Transverse colon (tissue), 4 donors: ENCODE measurements at regions of chr2 and their contacts with region 1.

Region 1: GRCh38 chr2:222959336-222959735 is 92.7 kb upstream of the KCNE4 start:
- DNase-seq: no peak
- H3K4me3 ChIP-seq: no peak overlapping the region
- H3K27ac ChIP-seq: no peak overlapping the region
- H3K4me1 ChIP-seq: no peaks in the 10 kb centered on the region
- H3K27me3 ChIP-seq: no peaks in the 10 kb centered on the region
- CTCF ChIP-seq: no peak
- EP300 ChIP-seq: no peak
- POLR2A ChIP-seq: no peak

Region 2: DNA sequence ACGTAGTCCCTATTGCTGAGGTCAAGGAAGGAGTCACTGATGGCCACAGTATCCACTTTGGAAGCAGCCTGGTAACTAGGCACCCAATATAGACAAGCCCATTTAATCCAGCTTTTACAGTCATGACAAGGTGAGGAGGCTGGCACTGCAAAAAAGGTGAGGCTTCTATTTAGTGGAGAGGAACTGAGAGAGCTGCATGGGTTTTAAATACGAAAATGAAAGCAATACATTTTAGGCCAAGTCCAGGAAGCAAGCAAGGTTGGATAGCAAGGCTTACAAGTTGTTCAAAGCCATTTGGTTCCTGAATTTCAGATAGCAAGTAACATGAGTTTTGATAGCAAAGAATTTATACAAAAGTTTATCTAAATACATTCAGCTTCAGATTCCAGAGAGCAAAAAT is 454.6 kb before region 1 on chr2:
- in situ Hi-C with region 1: no loop called
- intact Hi-C with region 1: no loop called
- DNase-seq: no peak
- H3K4me3 ChIP-seq: no peak overlapping the region
- H3K27ac ChIP-seq: no peak overlapping the region
- H3K4me1 ChIP-seq: peaks cover 0 to 3% (median 0%) of the 10 kb centered on the region in 4 donors
- H3K27me3 ChIP-seq: no peaks in the 10 kb centered on the region
- CTCF ChIP-seq: no peak
- EP300 ChIP-seq: no peak
- POLR2A ChIP-seq: no peak

Region 3: GRCh38 chr2:223580951-223581350 is 621.6 kb after region 1 on chr2:
- in situ Hi-C with region 1: loop called in 1 of 4 experiments (anchors 25 kb)
- intact Hi-C with region 1: no loop called
- DNase-seq: no peak
- H3K4me3 ChIP-seq: no peak overlapping the region
- H3K27ac ChIP-seq: no peak overlapping the region
- H3K4me1 ChIP-seq: no peaks in the 10 kb centered on the region
- H3K27me3 ChIP-seq: no peaks in the 10 kb centered on the region
- CTCF ChIP-seq: no peak
- EP300 ChIP-seq: no peak
- POLR2A ChIP-seq: no peak

Region 4: DNA sequence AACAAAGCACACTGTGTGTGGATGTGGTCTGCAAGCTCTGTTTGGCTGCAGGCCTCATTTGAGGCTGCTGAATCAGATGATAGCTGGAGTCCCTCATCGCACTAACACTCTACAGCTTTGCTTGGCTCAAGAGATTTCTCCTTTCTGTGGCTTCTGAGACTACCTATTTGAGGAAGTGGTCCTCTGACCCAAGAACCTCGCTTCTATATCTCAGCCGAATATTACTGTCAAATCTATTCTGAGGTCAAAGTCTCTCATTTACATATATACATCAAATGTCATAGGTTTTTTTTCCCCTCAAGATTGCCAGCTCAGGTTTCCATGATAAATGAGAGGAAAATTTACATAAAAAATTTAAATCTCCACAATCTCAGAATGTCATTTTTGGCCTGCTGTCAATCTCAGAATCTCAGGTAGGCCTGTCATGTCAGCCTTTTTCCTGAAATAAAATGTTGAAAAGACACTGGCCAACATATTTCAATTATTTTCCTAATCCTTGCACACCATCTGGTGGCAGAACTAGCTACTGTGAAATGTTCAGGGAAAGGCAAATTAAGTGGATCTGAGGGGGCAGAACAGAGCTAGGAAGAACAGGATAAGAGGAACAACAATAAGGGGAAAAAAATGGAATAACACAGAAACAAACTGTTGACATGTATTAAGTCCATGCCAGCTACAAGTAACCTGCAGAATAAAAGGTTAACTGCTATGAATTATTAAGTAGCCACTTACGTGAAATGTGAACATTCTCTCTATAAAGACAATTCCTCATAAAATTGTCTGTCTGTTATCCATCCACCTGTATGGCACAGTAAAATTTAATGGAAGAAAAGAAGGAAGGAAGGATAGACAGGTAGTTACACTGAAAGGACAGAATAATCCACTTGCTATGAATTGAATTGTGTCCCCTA is 838.7 kb after region 1 on chr2:
- in situ Hi-C with region 1: loop called in 2 of 4 experiments (anchors 25 kb)
- intact Hi-C with region 1: no loop called
- DNase-seq: no peak
- H3K4me3 ChIP-seq: no peak overlapping the region
- H3K27ac ChIP-seq: no peak overlapping the region
- H3K4me1 ChIP-seq: peaks cover 0 to 3% (median 0%) of the 10 kb centered on the region in 4 donors
- H3K27me3 ChIP-seq: no peaks in the 10 kb centered on the region
- CTCF ChIP-seq: peak; percentile 42 to 55 (median 45)
- EP300 ChIP-seq: no peak
- POLR2A ChIP-seq: no peak

Region 5: DNA sequence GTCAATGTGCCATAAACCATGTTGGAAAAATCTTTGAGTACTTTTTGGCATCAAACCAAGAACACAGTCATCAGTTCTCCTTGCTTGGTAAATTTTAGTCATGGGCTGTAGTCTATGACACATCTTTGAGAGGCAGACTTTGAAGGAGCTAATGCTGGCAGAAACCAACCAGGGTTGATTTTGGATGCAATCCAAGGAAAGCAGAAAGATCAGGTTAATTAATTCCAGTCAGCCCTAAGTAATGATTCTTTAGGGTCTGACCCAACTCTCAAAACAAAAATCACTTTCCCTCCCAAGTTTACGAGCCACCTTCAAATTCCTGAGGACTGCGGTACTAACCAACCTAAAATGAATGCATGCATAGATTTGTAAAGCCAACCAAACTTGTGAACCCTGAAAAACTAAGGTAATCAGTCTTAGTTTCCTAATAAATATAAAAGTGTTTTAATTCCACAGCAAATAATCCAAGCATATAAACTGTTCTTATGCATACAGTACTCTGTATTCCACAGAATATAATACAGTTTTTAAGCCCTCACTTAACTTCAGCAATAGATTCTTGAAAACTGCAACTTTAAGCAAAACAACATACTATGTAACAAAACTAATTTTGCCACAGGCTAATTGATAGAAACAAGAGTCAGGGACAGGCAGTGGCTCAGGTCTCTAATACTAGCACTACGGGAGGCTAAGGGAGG is 856.0 kb after region 1 on chr2:
- in situ Hi-C with region 1: loop called in 1 of 4 experiments (anchors 25 kb)
- intact Hi-C with region 1: no loop called
- DNase-seq: no peak
- H3K4me3 ChIP-seq: no peak overlapping the region
- H3K27ac ChIP-seq: no peak overlapping the region
- H3K4me1 ChIP-seq: no peaks in the 10 kb centered on the region
- H3K27me3 ChIP-seq: no peaks in the 10 kb centered on the region
- CTCF ChIP-seq: no peak
- EP300 ChIP-seq: no peak
- POLR2A ChIP-seq: no peak